ENCODE measurements at regions of chr12 and their contacts with region 1.

Region 1: DNA sequence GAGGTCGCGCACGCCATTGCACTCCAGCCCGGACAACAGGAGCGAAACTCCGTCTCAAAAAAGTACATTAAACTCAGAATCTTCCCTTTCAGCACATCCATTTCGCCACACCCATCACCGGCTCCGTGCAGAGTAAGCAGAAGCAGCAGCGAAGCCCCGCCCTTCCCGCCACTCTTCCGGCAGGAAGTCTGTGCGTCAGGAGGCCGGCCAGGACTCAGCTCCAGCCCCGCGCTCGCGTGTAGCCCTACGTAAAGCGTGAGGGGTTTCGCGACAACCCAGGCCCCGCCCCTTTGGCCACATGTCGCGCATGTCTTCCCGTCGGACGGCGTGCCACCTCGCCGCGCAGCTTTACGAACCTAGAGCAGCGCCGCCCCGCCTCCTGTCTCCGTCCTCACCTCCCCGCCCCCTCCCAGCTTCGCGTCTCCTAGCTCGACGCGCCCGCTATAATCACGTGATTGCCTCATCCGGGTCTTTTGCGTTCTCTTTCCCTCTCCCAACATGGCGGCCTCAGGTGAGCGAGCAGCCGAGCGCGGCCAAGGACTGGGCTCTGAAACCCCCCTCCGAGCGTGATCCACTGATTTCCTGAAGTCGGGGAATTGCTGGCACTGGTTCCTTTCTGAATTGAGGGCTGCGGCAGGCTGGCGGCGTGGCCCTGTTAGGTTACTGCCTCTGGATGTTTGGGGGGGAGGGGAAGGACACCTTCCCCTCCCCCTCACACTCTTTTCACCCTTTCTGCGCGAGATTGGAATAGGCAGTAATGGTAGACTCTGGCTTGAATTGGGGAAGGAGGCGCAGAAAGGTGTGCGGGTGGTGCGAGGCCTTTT is at the start of gene EIF4B:
- DNase-seq: peak; percentile 100
- ATAC-seq: peak; percentile 93
- H3K4me3 Mint-ChIP-seq: peak within 1 kb of the TSS; percentile 96
- H3K27ac Mint-ChIP-seq: peak within 1 kb of the TSS; percentile 99
- H3K4me1 Mint-ChIP-seq: peaks cover 40% of the 10 kb centered on the region
- H3K27me3 Mint-ChIP-seq: no peaks in the 10 kb centered on the region
- total RNA-seq, gene EIF4B: 698 to 781 TPM

Region 2: GRCh38 chr12:52069327-52070184 is 936.6 kb before region 1 on chr12 and contains the start of gene ATG101:
- CTCF ChIA-PET with region 1: no interaction called
- POLR2A ChIA-PET with region 1: interaction called, 4 read pairs
- intact Hi-C with region 1: loop called in 1 of 2 experiments (anchors 1 kb)
- DNase-seq: peak; percentile 92
- ATAC-seq: peak; percentile 95
- H3K4me3 Mint-ChIP-seq: peak within 1 kb of the TSS; percentile 99
- H3K27ac Mint-ChIP-seq: peak within 1 kb of the TSS; percentile 99
- H3K4me1 Mint-ChIP-seq: peaks cover 56% of the 10 kb centered on the region
- H3K27me3 Mint-ChIP-seq: no peaks in the 10 kb centered on the region
- total RNA-seq, gene ATG101: 24.0 to 30.7 TPM

Region 3: DNA sequence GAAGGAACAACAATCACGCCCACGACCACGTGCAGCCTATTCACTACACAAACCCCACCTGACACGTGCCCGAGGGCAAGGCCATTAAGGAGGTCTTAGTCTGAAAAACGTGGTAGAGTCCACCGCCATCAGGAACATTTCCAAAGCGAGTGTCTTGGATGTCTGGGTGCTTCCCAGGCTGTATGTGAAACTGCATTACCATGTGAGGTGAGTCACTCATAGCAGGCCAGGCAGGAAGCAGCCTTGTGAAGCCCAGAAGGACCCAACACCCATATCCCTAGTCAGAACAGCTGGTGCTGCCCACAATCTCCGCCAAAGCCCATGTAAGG is 168.8 kb before region 1 on chr12:
- CTCF ChIA-PET with region 1: no interaction called
- POLR2A ChIA-PET with region 1: no interaction called
- intact Hi-C with region 1: no loop called
- DNase-seq: peak; percentile 27
- ATAC-seq: no peak
- H3K4me3 Mint-ChIP-seq: no peak overlapping the region
- H3K27ac Mint-ChIP-seq: peak overlapping the region; percentile 72
- H3K4me1 Mint-ChIP-seq: peaks cover 30% of the 10 kb centered on the region
- H3K27me3 Mint-ChIP-seq: peaks cover 5% of the 10 kb centered on the region

Region 4: DNA sequence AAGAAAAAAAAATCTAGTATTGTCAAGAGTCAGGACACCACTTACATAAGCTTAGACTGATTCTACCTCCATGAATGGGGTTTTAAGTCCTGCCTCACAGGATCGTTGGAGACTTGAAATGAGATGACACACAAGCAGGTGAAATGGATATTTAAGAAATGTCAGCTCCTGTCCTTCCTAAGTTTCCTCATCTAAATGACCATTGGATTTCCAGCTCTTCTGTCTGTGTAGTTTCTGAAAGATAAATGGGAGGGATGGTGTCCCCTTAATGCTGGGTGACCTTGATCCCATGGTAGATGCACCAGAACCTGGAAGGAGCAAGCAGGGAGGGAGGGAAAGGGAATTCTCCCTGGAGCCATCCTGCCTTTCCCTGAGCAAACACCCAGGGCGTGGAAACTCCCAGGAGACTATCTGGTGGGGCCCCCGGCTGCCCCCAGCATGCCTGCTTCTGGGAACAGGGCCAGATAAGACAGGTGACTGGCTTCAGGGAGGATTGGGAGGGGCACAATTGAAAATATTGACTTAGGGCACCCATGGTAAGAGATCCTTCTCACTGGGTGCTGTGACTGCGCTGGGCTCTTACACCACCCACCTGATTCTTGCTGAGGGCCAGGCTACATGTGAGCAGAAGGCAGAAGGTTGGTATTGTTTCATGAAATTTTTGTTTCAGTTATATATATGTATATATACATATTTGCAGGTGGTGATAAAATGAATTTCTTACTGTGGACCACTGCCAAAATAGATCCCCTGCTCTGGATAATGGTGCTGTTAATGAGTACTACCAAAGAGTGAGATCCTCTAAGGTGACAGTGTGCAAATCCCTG is 110.9 kb before region 1 on chr12:
- CTCF ChIA-PET with region 1: no interaction called
- POLR2A ChIA-PET with region 1: no interaction called
- intact Hi-C with region 1: no loop called
- DNase-seq: no peak
- ATAC-seq: no peak
- H3K4me3 Mint-ChIP-seq: no peak overlapping the region
- H3K27ac Mint-ChIP-seq: no peak overlapping the region
- H3K4me1 Mint-ChIP-seq: no peaks in the 10 kb centered on the region
- H3K27me3 Mint-ChIP-seq: no peaks in the 10 kb centered on the region

Region 5: GRCh38 chr12:52924764-52925716 is 81.2 kb before region 1 on chr12:
- CTCF ChIA-PET with region 1: no interaction called
- POLR2A ChIA-PET with region 1: no interaction called
- intact Hi-C with region 1: no loop called
- DNase-seq: no peak
- ATAC-seq: no peak
- H3K4me3 Mint-ChIP-seq: no peak overlapping the region
- H3K27ac Mint-ChIP-seq: no peak overlapping the region
- H3K4me1 Mint-ChIP-seq: no peaks in the 10 kb centered on the region
- H3K27me3 Mint-ChIP-seq: no peaks in the 10 kb centered on the region

Region 6: DNA sequence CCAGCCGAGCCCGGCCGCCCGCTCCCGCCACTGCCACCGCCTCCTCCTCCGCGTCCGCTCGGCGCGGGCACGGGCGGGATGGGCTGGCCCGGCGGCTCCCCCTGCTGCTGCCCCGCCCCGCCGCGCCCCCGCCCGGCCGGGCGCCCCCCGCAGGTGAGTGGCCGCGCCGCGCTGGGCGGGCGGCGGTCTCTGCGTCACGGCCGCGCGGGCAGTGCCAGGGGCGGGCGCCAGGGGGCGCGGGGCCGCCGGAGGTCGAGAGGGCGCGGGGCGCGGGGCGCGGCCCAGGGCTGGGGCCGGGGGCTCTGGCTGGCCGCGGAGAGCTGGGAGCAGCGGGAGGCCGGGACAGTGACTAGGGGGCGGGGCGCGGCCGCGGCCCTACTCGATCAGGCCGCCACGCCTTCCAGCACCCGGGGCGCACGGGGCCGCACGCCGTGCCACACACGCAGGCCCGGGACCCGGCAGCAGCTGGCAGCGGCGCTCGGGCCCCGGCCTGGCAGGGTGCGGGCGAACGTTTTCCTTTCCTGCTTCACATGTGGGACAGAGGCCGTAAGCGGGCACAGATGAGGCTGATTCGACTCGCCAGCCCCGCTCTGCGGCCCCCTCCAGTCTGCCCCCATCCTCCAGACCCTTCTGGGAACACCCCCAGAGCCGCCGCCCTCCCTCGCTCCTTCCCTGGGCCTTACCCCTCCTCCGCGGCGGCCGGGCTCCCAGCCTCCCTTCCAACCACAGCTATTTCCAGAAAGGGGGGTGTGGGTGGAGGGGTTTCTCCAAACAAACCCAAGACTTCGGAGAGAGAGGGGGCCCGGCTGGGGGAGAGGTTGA is 41.2 kb after region 1 on chr12:
- CTCF ChIA-PET with region 1: interaction called, 4 read pairs
- POLR2A ChIA-PET with region 1: interaction called, 3 read pairs
- intact Hi-C with region 1: loop called in 1 of 2 experiments (anchors 1 kb)
- DNase-seq: peak; percentile 80
- ATAC-seq: peak; percentile 73
- H3K4me3 Mint-ChIP-seq: peak overlapping the region; percentile 86
- H3K27ac Mint-ChIP-seq: peak overlapping the region; percentile 37
- H3K4me1 Mint-ChIP-seq: peaks cover 30% of the 10 kb centered on the region
- H3K27me3 Mint-ChIP-seq: no peaks in the 10 kb centered on the region

Region 7: DNA sequence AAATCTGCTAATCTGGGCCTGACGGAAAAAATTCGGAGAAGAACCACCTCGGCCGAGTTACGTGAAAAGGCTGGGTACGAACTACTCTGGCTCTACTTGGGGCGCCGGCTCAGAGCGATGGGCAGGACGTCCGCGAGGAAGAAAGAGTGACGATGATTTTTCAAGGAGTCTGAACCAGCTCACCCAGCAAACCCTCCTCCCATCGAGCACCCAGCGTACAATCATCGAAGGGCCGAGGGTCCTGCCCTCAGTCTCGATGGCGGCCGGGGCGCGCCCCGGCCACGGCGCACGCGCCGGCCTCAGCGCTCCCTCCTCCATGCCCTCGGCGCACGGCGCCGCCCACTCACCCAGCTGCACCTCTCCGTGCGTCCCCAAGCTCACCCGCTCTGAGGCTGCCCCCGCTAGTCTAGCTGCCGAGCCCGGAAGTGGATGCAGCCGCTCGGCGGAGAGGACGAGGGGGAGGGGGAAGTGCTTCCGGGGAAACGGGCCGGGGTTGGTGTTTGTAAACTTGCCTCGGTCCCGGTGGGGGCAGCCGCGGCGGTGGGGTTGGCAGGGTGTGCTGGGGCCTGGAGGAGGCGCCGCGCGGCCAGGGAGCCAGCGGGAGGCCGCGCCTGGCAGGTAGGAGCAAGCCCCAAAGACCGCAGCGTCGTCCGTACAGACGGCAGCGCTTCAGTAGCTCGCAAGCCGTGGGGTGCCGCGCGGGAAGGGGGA is 174.2 kb after region 1 on chr12 and contains the starts of genes CSAD and ZNF740:
- CTCF ChIA-PET with region 1: no interaction called
- POLR2A ChIA-PET with region 1: interaction called, 6 read pairs
- intact Hi-C with region 1: loop called (anchors 1 kb)
- DNase-seq: peak; percentile 99
- ATAC-seq: peak; percentile 94
- H3K4me3 Mint-ChIP-seq: peak within 1 kb of the TSS; percentile 98
- H3K27ac Mint-ChIP-seq: peak within 1 kb of the TSS; percentile 98
- H3K4me1 Mint-ChIP-seq: peaks cover 60% of the 10 kb centered on the region
- H3K27me3 Mint-ChIP-seq: no peaks in the 10 kb centered on the region
- total RNA-seq, gene CSAD: 20.0 to 23.1 TPM
- total RNA-seq, gene ZNF740: 34.9 to 40.2 TPM

Region 8: GRCh38 chr12:53279283-53279869 is 273.2 kb after region 1 on chr12:
- CTCF ChIA-PET with region 1: no interaction called
- POLR2A ChIA-PET with region 1: no interaction called
- intact Hi-C with region 1: no loop called
- DNase-seq: no peak
- ATAC-seq: no peak
- H3K4me3 Mint-ChIP-seq: no peak overlapping the region
- H3K27ac Mint-ChIP-seq: no peak overlapping the region
- H3K4me1 Mint-ChIP-seq: peaks cover under 1% of the 10 kb centered on the region
- H3K27me3 Mint-ChIP-seq: no peaks in the 10 kb centered on the region

Region 9: DNA sequence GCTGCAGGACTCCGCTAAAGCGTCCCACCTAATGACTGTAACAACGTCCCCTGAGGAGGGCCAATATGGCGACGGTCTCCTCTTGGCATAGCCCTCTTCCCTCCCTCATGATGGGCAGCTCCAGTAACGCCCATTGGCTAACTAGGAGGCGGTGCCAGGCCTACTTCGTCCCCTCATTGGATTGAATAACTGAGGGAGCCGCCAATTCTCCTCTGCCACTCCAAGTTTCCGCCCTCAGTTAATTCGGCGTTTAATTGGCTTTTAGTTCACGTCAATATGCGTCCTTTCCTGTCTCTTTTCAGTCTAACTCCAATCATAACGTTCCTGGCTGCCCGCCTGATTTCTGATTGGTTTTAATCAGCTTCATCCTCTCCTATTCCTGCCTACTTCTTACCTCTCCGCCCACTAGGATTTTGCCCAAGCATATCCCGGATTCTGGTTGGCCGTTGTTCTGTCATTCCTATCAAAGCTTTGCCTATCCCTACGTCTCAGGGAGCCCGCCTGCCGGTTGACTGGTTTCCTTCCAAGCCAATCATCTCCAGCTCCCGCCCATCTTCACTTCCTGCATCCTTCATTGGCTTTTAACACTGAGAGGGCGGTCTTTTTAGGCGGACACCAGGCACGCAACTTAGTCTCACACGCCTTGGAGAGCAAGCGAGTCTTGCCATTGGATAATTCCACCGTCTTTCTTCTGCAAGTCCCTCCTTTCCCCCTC is 373.3 kb after region 1 on chr12:
- CTCF ChIA-PET with region 1: no interaction called
- POLR2A ChIA-PET with region 1: interaction called, 5 read pairs
- intact Hi-C with region 1: loop called (anchors 1 to 2 kb)
- DNase-seq: peak; percentile 96
- ATAC-seq: peak; percentile 82
- H3K4me3 Mint-ChIP-seq: no peak overlapping the region
- H3K27ac Mint-ChIP-seq: no peak overlapping the region
- H3K4me1 Mint-ChIP-seq: peaks cover 39% of the 10 kb centered on the region
- H3K27me3 Mint-ChIP-seq: no peaks in the 10 kb centered on the region

Region 10: GRCh38 chr12:53625946-53626701 is 619.9 kb after region 1 on chr12 and contains the start of gene ATF7:
- CTCF ChIA-PET with region 1: interaction called, 3 read pairs
- POLR2A ChIA-PET with region 1: no interaction called
- intact Hi-C with region 1: loop called in 1 of 2 experiments (anchors 1 kb)
- DNase-seq: peak; percentile 99
- ATAC-seq: peak; percentile 96
- H3K4me3 Mint-ChIP-seq: peak within 1 kb of the TSS; percentile 95
- H3K27ac Mint-ChIP-seq: peak within 1 kb of the TSS; percentile 84
- H3K4me1 Mint-ChIP-seq: peaks cover 35% of the 10 kb centered on the region
- H3K27me3 Mint-ChIP-seq: no peaks in the 10 kb centered on the region
- total RNA-seq, gene ATF7: 23.0 to 28.1 TPM

Measured in activated CD4-positive, alpha-beta T cell treated with anti-CD3 and anti-CD28 coated beads for 36 hours (primary cell).